Dorsolateral prefrontal cortex (tissue), 120 donors: ENCODE measurements at regions of chr3 and their contacts with region 1.

Region 1: GRCh38 chr3:152574461-152575079 is 260.4 kb upstream of the P2RY1 start:
- DNase-seq: peak in 9 of 10 donors; percentile 13 to 68 (median 47)
- H3K4me3 ChIP-seq: no peak overlapping the region
- H3K27ac ChIP-seq: peak overlapping the region in 4 of 59 donors; percentile 10 to 48 (median 28)
- H3K27me3 ChIP-seq: no peaks in the 10 kb centered on the region
- CTCF ChIP-seq: peak; percentile 40 to 91 (median 70)

Region 2: GRCh38 chr3:152471814-152472671 is 102.5 kb before region 1 on chr3:
- intact Hi-C with region 1: loop called in 1 of 2 experiments (anchors 10 kb)
- DNase-seq: peak in 8 of 10 donors; percentile 33 to 74 (median 55)
- H3K4me3 ChIP-seq: peak overlapping the region in 57 of 59 donors; percentile 1 to 64 (median 38)
- H3K27ac ChIP-seq: peak overlapping the region in 13 of 59 donors; percentile 19 to 59 (median 40)
- H3K27me3 ChIP-seq: no peaks in the 10 kb centered on the region
- CTCF ChIP-seq: peak; percentile 54 to 91 (median 79)

Region 3: DNA sequence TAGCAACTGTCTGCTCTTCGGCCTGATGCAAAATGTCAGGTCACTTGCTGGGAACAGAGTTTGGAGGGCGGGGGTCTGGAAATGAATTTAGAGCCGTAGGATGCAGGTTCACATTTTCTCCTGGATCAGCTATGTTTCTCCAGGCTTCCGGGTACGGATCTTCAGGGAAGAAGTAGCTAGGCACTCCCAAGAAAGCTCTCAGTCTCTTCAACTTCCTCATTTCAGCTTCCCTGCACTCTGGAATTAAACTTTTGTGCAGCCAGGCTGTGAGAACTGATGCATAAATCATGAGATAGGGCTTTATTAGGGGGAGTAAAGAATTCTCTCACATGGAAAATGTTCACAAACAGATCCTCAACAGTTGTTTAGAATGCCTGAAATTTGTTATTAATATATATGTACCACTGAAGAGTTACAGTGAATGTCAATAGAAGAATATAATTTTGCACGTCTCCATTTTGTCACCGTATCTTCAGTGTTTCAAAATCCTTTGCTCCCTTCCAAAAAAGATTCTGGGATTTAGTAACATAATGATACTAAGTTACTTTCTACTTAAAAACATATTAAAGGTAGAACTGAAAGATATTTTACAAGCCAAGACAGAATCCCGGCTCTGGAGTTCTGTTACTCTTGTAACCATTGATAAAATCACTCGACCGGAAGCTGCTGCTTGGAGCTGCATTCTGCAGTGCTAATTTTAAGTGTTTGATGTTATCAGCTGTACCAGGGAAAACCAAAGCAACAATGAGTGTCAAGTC is 81.8 kb after region 1 on chr3:
- intact Hi-C with region 1: loop called in 1 of 2 experiments (anchors 10 kb)
- DNase-seq: no peak
- H3K4me3 ChIP-seq: peak overlapping the region in 55 of 59 donors; percentile 1 to 53 (median 35)
- H3K27ac ChIP-seq: peak overlapping the region in 57 of 59 donors; percentile 0 to 94 (median 61)
- H3K27me3 ChIP-seq: no peaks in the 10 kb centered on the region
- CTCF ChIP-seq: no peak

Region 4: DNA sequence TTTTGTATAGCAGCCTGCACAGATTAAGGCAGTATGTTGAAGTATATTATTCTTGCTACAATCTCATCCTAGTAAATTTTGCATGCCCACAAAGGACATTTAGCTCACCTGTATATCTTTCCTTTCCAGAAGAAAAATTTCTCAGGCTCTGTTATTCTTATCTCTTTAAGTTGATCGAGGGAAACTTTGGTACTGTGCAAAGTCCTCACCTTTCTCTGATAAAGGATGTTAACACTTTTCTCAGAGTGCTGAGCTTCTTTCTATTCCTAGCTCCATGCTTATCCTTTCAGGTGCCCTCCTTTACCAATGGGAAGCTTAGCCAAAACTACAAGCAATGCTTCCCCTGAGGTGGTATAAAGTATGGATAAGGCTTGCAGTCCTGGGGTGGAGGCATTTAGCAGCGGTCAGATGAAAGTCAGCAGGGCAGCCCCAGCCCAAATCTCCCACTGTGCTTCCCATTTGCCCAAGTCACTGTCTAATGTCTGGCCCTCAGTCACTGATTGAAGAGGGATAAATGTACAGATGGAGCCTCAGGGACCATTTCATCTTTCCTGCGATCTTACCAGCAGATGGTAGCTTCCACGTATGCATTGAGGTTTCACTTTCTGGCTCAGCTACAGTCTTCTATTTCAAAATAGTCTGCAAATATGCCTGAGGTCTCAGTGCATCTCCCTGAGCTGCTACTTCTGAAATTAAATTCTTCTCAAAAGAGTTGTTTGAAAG is 132.6 kb after region 1 on chr3:
- intact Hi-C with region 1: no loop called
- DNase-seq: no peak
- H3K4me3 ChIP-seq: no peak overlapping the region
- H3K27ac ChIP-seq: no peak overlapping the region
- H3K27me3 ChIP-seq: no peaks in the 10 kb centered on the region
- CTCF ChIP-seq: no peak